ENCODE measurements at regions of chr2 and their contacts with region 1.

Region 1: DNA sequence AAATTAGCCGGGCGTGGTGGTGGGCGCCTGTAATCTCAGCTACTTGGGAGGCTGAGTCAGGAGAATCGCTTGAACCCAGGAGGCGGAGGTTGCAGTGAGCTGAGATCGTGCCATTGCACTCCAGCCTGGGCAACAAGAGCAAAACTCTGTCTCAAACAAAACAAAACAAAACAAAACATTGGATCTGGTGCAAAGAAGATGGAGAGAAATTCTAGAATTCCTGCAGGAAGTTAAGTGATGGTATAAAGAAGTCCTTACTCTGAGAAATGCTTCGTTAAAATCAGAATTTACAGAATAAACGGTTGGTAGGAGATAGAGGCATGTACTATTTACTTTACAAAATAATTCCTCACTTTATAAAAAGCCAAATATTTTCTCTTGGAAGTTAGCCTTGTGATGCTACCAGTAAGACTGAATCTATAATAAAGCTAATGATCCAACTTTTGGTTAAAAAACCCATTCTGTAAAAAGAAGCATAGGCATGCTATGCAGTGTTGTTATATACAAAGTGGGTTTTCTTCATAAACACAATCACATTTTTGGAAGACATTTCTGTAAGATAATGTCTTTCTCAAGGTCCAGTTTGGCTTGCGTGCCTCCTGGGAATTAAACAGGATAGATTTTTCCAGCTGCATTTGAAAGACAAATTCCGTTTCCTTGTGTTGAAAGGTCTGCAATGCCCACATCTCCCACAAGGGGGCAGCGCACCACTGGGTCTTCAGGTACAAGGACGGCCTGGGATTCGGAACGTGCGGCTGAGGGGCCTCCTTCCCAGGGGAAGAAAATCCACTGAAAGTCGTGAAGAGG is 35.6 kb upstream of the PNO1 start:
- DNase-seq: peak; percentile 70 to 89
- ATAC-seq: peak; percentile 80 to 85
- H3K4me3 ChIP-seq: no peak overlapping the region
- H3K27ac ChIP-seq: no peak overlapping the region
- H3K4me1 ChIP-seq: no peaks in the 10 kb centered on the region
- CTCF ChIP-seq: peak; percentile 98
- EP300 ChIP-seq: no peak
- POLR2A ChIP-seq: no peak
- RAD21 ChIP-seq: peak; percentile 93

Region 2: DNA sequence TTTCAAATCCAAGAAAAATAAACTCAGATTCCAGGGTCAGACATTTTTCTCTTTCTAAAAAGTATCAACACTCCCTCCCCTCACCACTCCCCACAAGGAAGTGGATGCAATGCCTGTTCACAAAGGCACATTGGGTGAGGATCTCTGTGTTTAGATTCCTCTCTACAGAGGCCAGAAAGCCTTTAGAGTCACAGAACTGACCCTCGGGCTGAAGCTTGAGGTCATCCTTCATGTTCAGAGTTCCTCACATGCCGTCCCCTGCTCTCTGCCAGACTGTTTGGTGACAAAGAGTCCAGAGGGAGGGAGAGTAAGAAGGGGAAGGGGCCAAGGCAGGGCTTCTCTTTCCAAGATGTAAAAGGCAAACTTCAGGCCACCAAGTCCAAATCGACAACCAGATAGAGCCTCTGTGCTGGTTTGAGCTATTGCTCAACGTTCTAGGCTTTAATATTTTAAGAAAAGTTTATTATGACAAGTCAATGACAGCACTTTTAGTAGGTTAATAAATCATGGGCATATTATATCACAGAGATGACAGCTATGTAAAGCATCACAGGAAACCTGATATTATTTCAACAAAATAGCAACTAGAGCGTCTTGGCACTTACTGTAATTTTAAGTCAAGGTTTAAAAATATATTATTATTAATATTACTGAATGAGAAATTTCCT is 455.6 kb before region 1 on chr2:
- CTCF ChIA-PET with region 1: no interaction called
- POLR2A ChIA-PET with region 1: no interaction called
- DNase-seq: no peak
- ATAC-seq: no peak
- H3K4me3 ChIP-seq: no peak overlapping the region
- H3K27ac ChIP-seq: no peak overlapping the region
- H3K4me1 ChIP-seq: no peaks in the 10 kb centered on the region
- CTCF ChIP-seq: no peak
- EP300 ChIP-seq: no peak
- POLR2A ChIP-seq: no peak
- RAD21 ChIP-seq: no peak

Region 3: DNA sequence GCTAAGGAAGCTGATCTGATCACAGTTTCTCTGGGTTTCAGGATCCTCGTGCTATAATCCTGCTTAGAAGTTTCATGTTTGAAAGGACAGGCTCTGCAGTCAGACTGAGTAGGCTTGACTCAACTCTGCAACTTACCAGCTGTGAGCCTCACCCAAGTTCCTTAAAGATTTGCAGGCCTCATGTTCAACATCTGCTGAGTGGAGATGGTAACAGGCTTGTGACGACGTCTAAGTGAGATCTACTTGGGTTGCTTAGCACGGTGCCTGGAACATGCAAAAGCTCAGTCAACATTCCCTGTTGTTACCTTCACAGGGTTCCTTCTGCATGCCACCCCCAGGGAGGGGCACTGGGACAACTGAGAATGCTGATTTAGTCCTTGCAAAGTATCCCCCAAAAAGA is 223.5 kb before region 1 on chr2:
- CTCF ChIA-PET with region 1: no interaction called
- POLR2A ChIA-PET with region 1: no interaction called
- DNase-seq: no peak
- ATAC-seq: no peak
- H3K4me3 ChIP-seq: no peak overlapping the region
- H3K27ac ChIP-seq: no peak overlapping the region
- H3K4me1 ChIP-seq: no peaks in the 10 kb centered on the region
- CTCF ChIP-seq: no peak
- EP300 ChIP-seq: no peak
- POLR2A ChIP-seq: no peak
- RAD21 ChIP-seq: no peak

Region 4: GRCh38 chr2:68110102-68110501 is 12.0 kb before region 1 on chr2:
- CTCF ChIA-PET with region 1: interaction called, 25 read pairs
- POLR2A ChIA-PET with region 1: no interaction called
- DNase-seq: peak in 1 of 2 experiments; percentile 43
- ATAC-seq: peak in 1 of 2 experiments; percentile 69; a peak in 3 of 6 replicates
- H3K4me3 ChIP-seq: no peak overlapping the region
- H3K27ac ChIP-seq: no peak overlapping the region
- H3K4me1 ChIP-seq: 0 out of 3 replicates have a peak, but pooled peaks cover 5% of the 10 kb centered on the region
- CTCF ChIP-seq: no peak
- EP300 ChIP-seq: no peak
- POLR2A ChIP-seq: no peak
- RAD21 ChIP-seq: peak in 1 of 2 experiments; percentile 12; a peak in 1 of 5 replicates

Region 5: DNA sequence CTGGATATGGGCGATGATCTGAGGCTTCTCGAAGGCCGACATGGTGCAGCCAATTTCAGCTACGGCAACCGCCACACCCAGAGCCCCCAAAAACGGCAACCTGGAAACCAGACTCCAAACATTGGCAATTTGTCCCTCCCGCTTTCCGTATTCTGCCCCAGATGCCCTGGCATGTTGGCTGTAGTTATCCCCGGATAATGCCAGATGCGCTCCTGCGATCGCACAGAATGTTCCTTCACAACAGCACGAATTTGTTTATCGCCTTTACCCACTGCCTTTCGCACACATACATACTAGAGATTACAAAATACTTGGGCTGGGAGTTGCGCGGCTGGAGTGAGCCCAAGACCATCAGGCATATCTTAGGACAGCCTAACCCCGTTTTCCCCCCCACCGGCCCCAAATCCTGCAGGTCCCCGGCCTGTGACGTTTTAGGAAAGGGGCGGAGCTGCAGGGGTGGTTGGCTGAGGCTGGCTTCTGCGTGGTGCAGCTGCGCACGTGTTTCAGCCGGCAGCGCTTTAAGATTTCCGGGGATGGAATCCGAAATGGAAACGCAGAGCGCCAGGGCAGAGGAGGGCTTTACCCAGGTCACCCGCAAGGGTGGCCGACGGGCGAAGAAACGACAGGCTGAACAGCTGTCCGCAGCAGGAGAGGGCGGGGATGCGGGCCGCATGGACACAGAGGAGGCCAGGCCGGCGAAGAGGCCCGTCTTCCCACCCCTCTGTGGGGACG is 35.5 kb after region 1 on chr2 and contains the start of gene PNO1:
- CTCF ChIA-PET with region 1: interaction called, 12 read pairs
- POLR2A ChIA-PET with region 1: interaction called, 3 read pairs
- DNase-seq: peak; percentile 95 to 97
- ATAC-seq: peak; percentile 89 to 94
- H3K4me3 ChIP-seq: peak within 1 kb of the TSS; percentile 75
- H3K27ac ChIP-seq: peak within 1 kb of the TSS; percentile 91 to 93
- H3K4me1 ChIP-seq: peaks cover 18% of the 10 kb centered on the region
- CTCF ChIP-seq: no peak
- EP300 ChIP-seq: no peak
- POLR2A ChIP-seq: peak; percentile 59
- RAD21 ChIP-seq: no peak
- polyA plus RNA-seq, gene PNO1: 50.1 and 63.2 TPM in 2 replicates

Region 6: DNA sequence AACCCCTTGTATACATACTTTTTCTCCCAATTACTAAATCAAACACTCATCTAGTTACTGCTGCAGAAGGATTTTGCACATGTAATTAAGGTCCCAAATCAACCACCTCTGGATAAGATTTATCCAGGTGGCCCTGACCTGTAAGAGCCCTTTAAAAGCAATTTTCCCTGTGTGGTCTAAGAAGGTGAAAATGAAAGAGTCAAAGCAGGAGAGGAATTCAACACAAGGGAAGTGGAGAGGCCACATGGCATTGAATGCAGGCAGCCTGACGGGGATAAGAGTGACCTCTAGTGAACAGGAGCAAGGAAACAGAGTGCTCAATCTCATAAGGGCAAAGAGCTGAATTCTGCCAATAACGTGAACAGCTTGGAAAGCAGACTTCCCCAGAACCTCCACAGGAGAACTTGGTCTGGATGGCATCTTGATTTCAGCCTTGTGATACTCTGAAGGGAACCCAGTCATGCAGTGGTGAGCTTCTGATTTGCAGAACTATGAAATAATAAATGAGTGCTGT is 103.1 kb after region 1 on chr2:
- CTCF ChIA-PET with region 1: interaction called, 12 read pairs
- POLR2A ChIA-PET with region 1: no interaction called
- DNase-seq: peak; percentile 23 to 77
- ATAC-seq: peak; percentile 99 to 100
- H3K4me3 ChIP-seq: no peak overlapping the region
- H3K27ac ChIP-seq: peak overlapping the region; percentile 4 to 35; a peak in 3 of 6 replicates
- H3K4me1 ChIP-seq: peaks cover 8% of the 10 kb centered on the region; the same call in 2 of the 3 replicates
- CTCF ChIP-seq: peak; percentile 75
- EP300 ChIP-seq: no peak
- POLR2A ChIP-seq: no peak
- RAD21 ChIP-seq: peak; percentile 62 to 73

Region 7: DNA sequence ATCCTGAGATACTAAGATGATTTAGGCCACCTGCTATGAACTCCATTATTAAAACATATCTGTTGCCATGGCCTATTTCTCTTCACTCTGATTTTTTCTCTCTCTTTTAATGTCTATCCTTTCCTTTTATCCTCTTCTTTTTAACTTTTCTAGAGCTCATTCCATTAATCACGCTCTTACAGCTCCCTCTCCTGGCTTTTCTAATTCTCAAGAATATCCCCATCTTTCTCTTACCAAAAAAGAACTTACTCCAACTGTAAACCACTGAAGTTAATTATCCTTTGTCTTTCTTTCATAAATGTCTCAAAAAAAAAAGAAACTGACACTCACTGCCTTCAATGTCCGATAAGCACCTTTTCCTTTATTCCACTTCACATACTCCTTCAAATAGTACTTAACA is 122.4 kb after region 1 on chr2:
- CTCF ChIA-PET with region 1: interaction called, 52 read pairs
- POLR2A ChIA-PET with region 1: interaction called, 4 read pairs
- DNase-seq: no peak
- ATAC-seq: 0 out of 6 replicates have a peak, but pooled peaks have one; percentile 35 to 48
- H3K4me3 ChIP-seq: no peak overlapping the region
- H3K27ac ChIP-seq: no peak overlapping the region
- H3K4me1 ChIP-seq: peaks cover 42% of the 10 kb centered on the region
- CTCF ChIP-seq: peak; percentile 34; the same call in 2 of the 3 replicates
- EP300 ChIP-seq: no peak
- POLR2A ChIP-seq: no peak
- RAD21 ChIP-seq: peak; percentile 39 to 43; a peak in 4 of 5 replicates

Region 8: GRCh38 chr2:68272246-68272994 is 150.3 kb after region 1 on chr2:
- CTCF ChIA-PET with region 1: interaction called, 11 read pairs
- POLR2A ChIA-PET with region 1: no interaction called
- DNase-seq: no peak
- ATAC-seq: no peak
- H3K4me3 ChIP-seq: no peak overlapping the region
- H3K27ac ChIP-seq: no peak overlapping the region
- H3K4me1 ChIP-seq: no peaks in the 10 kb centered on the region
- CTCF ChIP-seq: no peak
- EP300 ChIP-seq: no peak
- POLR2A ChIP-seq: no peak
- RAD21 ChIP-seq: no peak

Region 9: DNA sequence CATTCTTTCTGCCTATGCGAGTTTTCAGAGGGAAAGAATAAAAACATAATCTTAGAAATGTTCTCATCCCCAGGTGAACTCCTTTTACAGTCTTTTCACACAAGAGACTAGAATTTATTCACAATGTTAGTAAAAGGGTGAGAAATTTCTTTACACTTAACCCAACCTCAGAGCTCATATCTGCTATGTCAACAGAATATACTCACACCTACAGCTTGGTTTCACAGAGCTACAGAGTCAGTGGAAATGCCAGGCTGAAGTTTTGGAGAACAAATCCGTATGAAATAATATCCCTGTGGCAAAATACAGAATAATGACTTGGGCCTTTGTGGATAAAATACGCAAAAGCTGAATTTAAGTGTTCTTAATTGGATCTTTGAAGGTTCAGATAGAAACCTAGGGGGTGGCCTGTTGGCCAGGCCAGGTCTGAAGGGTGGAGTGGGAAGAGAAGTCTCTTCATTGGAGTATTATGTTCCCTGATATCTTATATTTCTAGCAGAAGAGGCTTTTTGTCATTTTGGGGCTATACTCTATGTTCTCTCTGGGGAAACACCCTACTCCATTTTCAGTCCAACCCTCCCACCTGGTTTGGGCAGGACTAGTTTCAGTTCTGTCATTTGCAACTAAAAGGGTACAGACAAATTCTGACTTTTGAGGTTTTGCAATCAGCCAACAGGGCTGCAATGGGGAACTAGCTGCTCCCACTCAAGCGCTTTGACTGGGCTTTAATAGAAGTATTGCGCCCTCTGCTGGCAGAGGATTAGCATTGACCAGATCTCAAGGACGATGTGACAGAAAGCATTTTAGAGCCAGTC is 319.3 kb after region 1 on chr2:
- CTCF ChIA-PET with region 1: interaction called, 45 read pairs
- POLR2A ChIA-PET with region 1: no interaction called
- DNase-seq: peak; percentile 48 to 88
- ATAC-seq: peak; percentile 94 to 98
- H3K4me3 ChIP-seq: no peak overlapping the region
- H3K27ac ChIP-seq: no peak overlapping the region
- H3K4me1 ChIP-seq: no peaks in the 10 kb centered on the region
- CTCF ChIP-seq: peak; percentile 98
- EP300 ChIP-seq: no peak
- POLR2A ChIP-seq: no peak
- RAD21 ChIP-seq: peak; percentile 84 to 92